Activated CD4-positive, alpha-beta T cell treated with anti-CD3 and anti-CD28 coated beads, Interleukin-2, amount 10 ng/mL, durations not matched to agents 7 days and 5 days (primary cell): ENCODE measurements at regions of chr7 and their contacts with region 1.

Region 1: GRCh38 chr7:143345428-143345900 is 17.0 kb downstream of the FAM131B start:
- DNase-seq: peak; percentile 67
- H3K4me3 Mint-ChIP-seq: peak overlapping the region; percentile 57
- H3K27ac Mint-ChIP-seq: peak overlapping the region; percentile 64
- H3K4me1 Mint-ChIP-seq: peaks cover 9% of the 10 kb centered on the region
- H3K27me3 Mint-ChIP-seq: peaks cover 32% of the 10 kb centered on the region

Region 2: DNA sequence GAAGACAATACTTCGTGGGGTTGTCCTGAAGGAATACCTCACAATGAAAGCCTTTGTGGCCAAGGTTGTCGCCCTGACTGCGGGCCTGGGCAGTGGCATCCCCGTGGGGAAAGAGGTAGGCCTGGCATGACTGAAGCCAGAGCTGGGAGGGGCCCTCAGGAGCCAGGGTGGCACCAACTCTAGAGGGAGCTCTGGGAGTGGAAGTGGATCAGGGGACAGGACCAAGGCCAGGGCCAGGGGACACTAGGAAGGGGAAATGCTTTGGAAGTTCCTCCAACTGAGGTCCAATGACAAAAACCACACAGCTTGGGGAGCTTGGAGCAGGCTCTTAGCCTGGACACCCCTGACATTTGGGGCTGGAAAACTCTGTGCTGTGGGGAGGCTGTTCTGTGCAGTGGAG is 23.7 kb before region 1 on chr7:
- CTCF ChIA-PET with region 1: no interaction called
- POLR2A ChIA-PET with region 1: no interaction called
- DNase-seq: no peak
- H3K4me3 Mint-ChIP-seq: no peak overlapping the region
- H3K27ac Mint-ChIP-seq: no peak overlapping the region
- H3K4me1 Mint-ChIP-seq: peaks cover 18% of the 10 kb centered on the region
- H3K27me3 Mint-ChIP-seq: peaks cover 8% of the 10 kb centered on the region

Region 3: GRCh38 chr7:143334244-143334643 is 11.2 kb before region 1 on chr7:
- CTCF ChIA-PET with region 1: interaction called, 10 read pairs
- POLR2A ChIA-PET with region 1: no interaction called
- DNase-seq: no peak
- H3K4me3 Mint-ChIP-seq: no peak overlapping the region
- H3K27ac Mint-ChIP-seq: no peak overlapping the region
- H3K4me1 Mint-ChIP-seq: no peaks in the 10 kb centered on the region
- H3K27me3 Mint-ChIP-seq: peaks cover 37% of the 10 kb centered on the region

Region 4: DNA sequence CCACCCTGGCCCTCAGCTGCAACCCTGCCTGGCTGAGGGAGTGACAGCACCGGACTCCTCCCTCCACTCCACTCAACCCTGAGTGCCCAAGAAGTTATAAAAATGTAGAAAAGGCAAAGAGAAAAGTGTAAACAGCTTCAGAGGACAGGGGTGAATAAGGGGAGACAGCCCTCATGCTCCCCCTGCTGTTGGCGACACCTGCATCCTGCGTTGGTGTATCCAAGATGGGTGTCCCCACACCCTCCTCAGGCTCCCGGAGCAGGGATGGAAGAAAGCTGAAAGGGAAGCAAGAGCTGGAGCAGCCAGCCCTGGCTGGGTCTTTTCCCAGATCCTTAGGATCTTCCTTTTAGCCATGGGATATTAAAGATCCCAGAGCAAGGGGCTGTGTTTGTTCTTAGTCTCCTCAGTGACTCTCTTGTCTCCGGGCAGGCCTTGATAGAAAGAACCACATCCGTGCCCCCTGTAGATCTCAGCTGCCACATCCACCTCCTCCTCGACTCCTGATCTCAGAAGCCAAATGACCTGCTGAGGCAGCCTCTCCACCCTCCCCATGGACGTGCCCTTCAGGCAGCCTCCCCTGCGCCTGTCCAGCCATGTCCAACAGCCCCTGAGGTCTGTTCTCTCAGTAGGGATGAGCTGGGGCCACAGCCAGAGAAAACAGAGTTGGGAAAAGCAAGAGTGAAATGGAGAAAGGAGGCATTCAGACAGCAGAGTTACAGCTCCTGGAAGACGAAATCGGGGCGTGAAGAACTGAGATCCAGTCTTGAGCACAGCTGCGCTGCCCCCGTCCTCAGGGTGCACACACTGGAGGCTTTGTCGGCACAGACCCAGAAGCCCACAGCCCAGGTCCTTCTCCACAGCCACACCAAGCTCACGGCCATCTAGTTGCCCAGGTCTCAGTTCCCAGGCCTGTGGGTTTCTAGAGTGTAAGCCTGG is 10.3 kb after region 1 on chr7:
- CTCF ChIA-PET with region 1: interaction called, 10 read pairs
- POLR2A ChIA-PET with region 1: no interaction called
- DNase-seq: no peak
- H3K4me3 Mint-ChIP-seq: no peak overlapping the region
- H3K27ac Mint-ChIP-seq: no peak overlapping the region
- H3K4me1 Mint-ChIP-seq: no peaks in the 10 kb centered on the region
- H3K27me3 Mint-ChIP-seq: peaks cover 23% of the 10 kb centered on the region

Region 5: DNA sequence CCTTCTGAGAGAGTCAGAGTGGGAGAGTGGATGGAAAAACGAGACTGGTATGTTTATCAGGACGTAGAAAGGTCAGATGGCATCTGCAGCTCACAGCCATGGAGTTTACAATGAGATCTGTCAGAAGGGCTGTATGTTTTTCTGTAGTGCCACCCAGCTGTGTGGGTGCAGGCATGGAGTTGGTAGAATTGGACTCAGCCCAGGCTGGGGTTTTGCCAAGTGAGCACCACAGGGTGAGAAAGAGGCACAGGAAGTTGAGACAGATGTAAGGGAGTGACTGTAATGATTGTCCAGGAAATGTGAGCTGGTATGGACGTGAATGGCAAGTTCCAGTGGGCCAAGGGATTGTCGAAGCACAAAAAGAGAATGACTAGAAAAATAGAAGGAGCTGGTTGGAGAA is 26.6 kb after region 1 on chr7:
- CTCF ChIA-PET with region 1: interaction called, 12 read pairs
- POLR2A ChIA-PET with region 1: no interaction called
- DNase-seq: no peak
- H3K4me3 Mint-ChIP-seq: no peak overlapping the region
- H3K27ac Mint-ChIP-seq: no peak overlapping the region
- H3K4me1 Mint-ChIP-seq: peaks cover 46% of the 10 kb centered on the region
- H3K27me3 Mint-ChIP-seq: peaks cover 6% of the 10 kb centered on the region